ENCODE measurements at regions of chr2 and their contacts with region 1.

Region 1: DNA sequence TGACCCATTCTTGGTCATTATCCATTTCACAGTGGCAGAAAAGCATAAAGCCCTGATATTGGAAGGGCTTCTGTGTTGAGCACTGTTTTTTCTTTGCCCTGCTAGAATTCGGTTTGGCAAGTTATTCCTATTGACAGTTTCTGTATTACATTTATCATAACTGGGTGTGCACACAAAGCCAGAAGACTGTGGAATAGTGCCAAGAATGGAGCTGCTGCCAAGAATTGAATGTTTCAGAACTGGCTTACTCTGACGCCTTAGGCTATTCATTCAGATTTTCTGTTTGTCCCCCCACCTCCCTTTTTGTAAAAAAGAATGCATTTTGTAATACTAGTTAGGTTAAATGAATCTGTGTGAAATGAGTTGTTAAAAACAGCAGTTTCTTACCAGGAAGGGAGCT is 12.7 kb downstream of the KDM3A start:
- DNase-seq: no peak
- ATAC-seq: no peak
- H3K4me3 ChIP-seq: no peak overlapping the region
- H3K4me3 Mint-ChIP-seq: no peak overlapping the region
- H3K27ac ChIP-seq: no peak overlapping the region
- H3K27ac Mint-ChIP-seq: no peak overlapping the region
- H3K4me1 ChIP-seq: no peaks in the 10 kb centered on the region
- H3K4me1 Mint-ChIP-seq: peaks cover 50% of the 10 kb centered on the region
- H3K27me3 ChIP-seq: no peaks in the 10 kb centered on the region
- H3K27me3 Mint-ChIP-seq: no peaks in the 10 kb centered on the region
- CTCF ChIP-seq: no peak

Region 2: GRCh38 chr2:86139981-86140380 is 313.9 kb before region 1 on chr2:
- CTCF ChIA-PET with region 1: no interaction called
- POLR2A ChIA-PET with region 1: no interaction called
- intact Hi-C with region 1: loop called in 1 of 2 experiments (anchors 10 kb)
- DNase-seq: peak in 3 of 14 experiments; percentile 4 to 31 (median 24)
- ATAC-seq: peak; percentile 57
- H3K4me3 ChIP-seq: no peak overlapping the region
- H3K4me3 Mint-ChIP-seq: no peak overlapping the region
- H3K27ac ChIP-seq: no peak overlapping the region
- H3K27ac Mint-ChIP-seq: peak overlapping the region; percentile 42
- H3K4me1 ChIP-seq: peaks cover 6% of the 10 kb centered on the region
- H3K4me1 Mint-ChIP-seq: peaks cover 19% of the 10 kb centered on the region
- H3K27me3 ChIP-seq: no peaks in the 10 kb centered on the region
- H3K27me3 Mint-ChIP-seq: no peaks in the 10 kb centered on the region
- CTCF ChIP-seq: no peak

Region 3: GRCh38 chr2:86263715-86264562 is 189.9 kb before region 1 on chr2:
- CTCF ChIA-PET with region 1: no interaction called
- POLR2A ChIA-PET with region 1: no interaction called
- intact Hi-C with region 1: no loop called
- DNase-seq: no peak
- ATAC-seq: no peak
- H3K4me3 ChIP-seq: no peak overlapping the region
- H3K4me3 Mint-ChIP-seq: no peak overlapping the region
- H3K27ac ChIP-seq: no peak overlapping the region
- H3K27ac Mint-ChIP-seq: no peak overlapping the region
- H3K4me1 ChIP-seq: no peaks in the 10 kb centered on the region
- H3K4me1 Mint-ChIP-seq: no peaks in the 10 kb centered on the region
- H3K27me3 ChIP-seq: no peaks in the 10 kb centered on the region
- H3K27me3 Mint-ChIP-seq: peaks cover 12% of the 10 kb centered on the region
- CTCF ChIP-seq: no peak

Measured in CD4-positive, alpha-beta T cell (primary cell).